Posterior cingulate gyrus (tissue), 11 donors: ENCODE measurements at regions of chr14 and their contacts with region 1.

Region 1: DNA sequence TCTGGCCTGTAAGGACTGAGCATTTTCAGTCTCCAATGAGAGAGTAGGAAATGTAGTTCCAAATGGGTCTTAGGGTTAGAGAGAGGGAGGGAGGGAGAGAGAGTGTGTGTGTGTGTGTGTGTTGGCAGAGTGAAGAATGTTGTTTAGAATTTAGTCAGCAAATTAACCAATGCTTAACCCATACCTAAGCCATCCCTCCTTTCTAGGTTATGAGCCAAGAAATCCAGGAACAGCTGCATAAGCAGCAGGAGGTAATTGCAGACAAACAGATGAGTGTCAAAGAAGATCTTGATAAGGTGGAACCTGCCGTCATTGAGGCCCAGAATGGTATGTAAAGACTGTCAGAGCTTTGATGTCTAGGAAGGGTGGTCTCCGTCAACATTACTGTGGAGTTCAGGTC is 56.9 kb downstream of the HSP90AA1 start:
- DNase-seq: no peak

Region 2: GRCh38 chr14:101980251-101981099 is 49.5 kb before region 1 on chr14:
- intact Hi-C with region 1: loop called (anchors 10 kb)
- DNase-seq: peak in 4 of 10 donors; percentile 28 to 86 (median 56)